PC-3 (cell line): ENCODE measurements at regions of chr3 and their contacts with region 1.

Region 1: DNA sequence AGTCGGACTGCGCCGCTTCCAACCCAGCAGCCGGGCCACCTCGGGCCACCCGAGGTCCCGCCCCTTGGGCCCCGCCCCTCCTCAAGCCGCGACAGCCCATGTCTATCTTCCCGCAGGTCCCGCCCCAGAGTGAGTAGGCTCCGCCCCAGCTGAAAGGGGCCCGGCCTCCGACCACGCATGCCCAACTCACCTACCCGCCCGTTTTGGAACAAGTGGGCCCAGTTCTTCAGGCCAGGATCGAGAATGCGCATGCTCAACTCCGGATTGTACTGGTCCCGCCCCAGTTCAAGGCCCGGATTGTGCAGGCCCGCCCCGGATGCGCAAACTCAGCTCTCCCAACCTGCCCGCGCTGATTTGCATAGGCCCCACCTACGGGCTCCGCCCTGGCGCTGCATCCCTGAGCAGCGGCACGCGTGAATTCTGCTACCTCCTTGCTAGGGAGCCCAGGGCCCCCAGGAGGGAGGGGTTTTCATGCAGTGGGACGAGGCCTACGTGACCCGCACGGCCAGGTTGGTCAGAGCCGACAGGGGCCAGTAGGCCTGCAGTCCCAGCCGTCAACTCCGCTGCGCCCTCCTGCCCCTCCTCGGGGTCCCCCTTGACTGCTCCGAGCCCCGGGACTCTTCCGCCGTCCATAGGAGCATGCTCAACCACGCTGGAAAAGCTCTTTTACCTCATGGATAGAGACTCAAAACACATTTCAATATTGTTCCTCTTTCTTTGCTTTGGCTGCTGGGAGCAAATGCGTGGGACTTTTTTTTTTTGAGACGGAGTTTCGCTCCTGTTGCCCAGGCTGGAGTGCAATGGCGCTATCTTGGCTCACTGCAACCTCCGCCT is at the start of gene PFKFB4:
- DNase-seq: peak; percentile 99
- ATAC-seq: peak; percentile 87
- H3K4me3 ChIP-seq: peak within 1 kb of the TSS; percentile 86
- H3K27ac ChIP-seq: peak within 1 kb of the TSS; percentile 9; the same call in 1 of the 2 replicates
- H3K4me1 ChIP-seq: peaks cover 31% of the 10 kb centered on the region
- H3K27me3 ChIP-seq: no peaks in the 10 kb centered on the region
- CTCF ChIP-seq: no peak
- total RNA-seq, gene PFKFB4: 33.5 and 35.2 TPM in 2 replicates

Region 2: DNA sequence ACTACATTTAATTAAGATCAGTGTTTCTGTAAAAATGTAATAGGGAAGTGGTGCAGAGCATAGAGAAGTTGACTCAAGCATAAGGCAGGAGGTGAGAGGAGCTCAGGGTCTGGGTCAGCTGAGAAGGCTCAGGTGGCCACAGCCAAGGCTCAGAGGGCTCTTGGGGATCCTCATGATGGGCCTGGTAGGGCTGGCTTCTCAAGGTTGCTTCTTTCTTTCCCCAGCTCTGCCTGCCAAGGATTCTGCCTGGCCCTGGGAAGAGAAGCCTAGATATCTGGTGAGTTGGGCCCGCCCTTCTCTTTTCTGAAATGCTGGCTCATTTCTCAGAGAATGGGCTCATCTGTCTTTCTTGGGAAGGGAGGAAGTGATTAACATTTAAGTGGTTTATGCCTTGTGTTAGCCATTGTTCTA is 309.6 kb before region 1 on chr3:
- CTCF ChIA-PET with region 1: no interaction called
- POLR2A ChIA-PET with region 1: no interaction called
- intact Hi-C with region 1: no loop called
- DNase-seq: no peak
- ATAC-seq: peak; percentile 89
- H3K4me3 ChIP-seq: no peak overlapping the region
- H3K27ac ChIP-seq: peak overlapping the region; percentile 13; the same call in 1 of the 2 replicates
- H3K4me1 ChIP-seq: peaks cover 5% of the 10 kb centered on the region; the same call in 1 of the 2 replicates
- H3K27me3 ChIP-seq: no peaks in the 10 kb centered on the region
- CTCF ChIP-seq: no peak

Region 3: GRCh38 chr3:48446425-48447193 is 110.4 kb before region 1 on chr3 and contains the start of gene ATRIP:
- CTCF ChIA-PET with region 1: interaction called, 4 read pairs
- POLR2A ChIA-PET with region 1: interaction called, 11 read pairs
- intact Hi-C with region 1: loop called (anchors 5 kb)
- DNase-seq: peak; percentile 93
- ATAC-seq: peak; percentile 89
- H3K4me3 ChIP-seq: peak within 1 kb of the TSS; percentile 98
- H3K27ac ChIP-seq: peak within 1 kb of the TSS; percentile 38
- H3K4me1 ChIP-seq: peaks cover 30% of the 10 kb centered on the region
- H3K27me3 ChIP-seq: no peaks in the 10 kb centered on the region
- CTCF ChIP-seq: no peak
- total RNA-seq, gene ATRIP: 13.9 and 16.1 TPM in 2 replicates

Region 4: GRCh38 chr3:48478596-48479555 is 78.1 kb before region 1 on chr3:
- CTCF ChIA-PET with region 1: no interaction called
- POLR2A ChIA-PET with region 1: no interaction called
- intact Hi-C with region 1: no loop called
- DNase-seq: no peak
- ATAC-seq: no peak
- H3K4me3 ChIP-seq: no peak overlapping the region
- H3K27ac ChIP-seq: no peak overlapping the region
- H3K4me1 ChIP-seq: no peaks in the 10 kb centered on the region
- H3K27me3 ChIP-seq: no peaks in the 10 kb centered on the region
- CTCF ChIP-seq: no peak

Region 5: GRCh38 chr3:48528754-48529153 is 28.3 kb before region 1 on chr3:
- CTCF ChIA-PET with region 1: no interaction called
- POLR2A ChIA-PET with region 1: interaction called, 11 read pairs
- intact Hi-C with region 1: no loop called
- DNase-seq: no peak
- ATAC-seq: no peak
- H3K4me3 ChIP-seq: no peak overlapping the region
- H3K27ac ChIP-seq: no peak overlapping the region
- H3K4me1 ChIP-seq: no peaks in the 10 kb centered on the region
- H3K27me3 ChIP-seq: no peaks in the 10 kb centered on the region
- CTCF ChIP-seq: no peak

Region 6: GRCh38 chr3:48635222-48636021 is 78.4 kb after region 1 on chr3 and contains the start of gene SLC26A6:
- CTCF ChIA-PET with region 1: interaction called, 5 read pairs
- POLR2A ChIA-PET with region 1: no interaction called
- intact Hi-C with region 1: loop called (anchors 2 kb)
- DNase-seq: peak; percentile 98
- ATAC-seq: peak; percentile 95
- H3K4me3 ChIP-seq: peak within 1 kb of the TSS; percentile 90
- H3K27ac ChIP-seq: no peak within 1 kb of the TSS; the same call in 1 of the 2 replicates
- H3K4me1 ChIP-seq: peaks cover 26% of the 10 kb centered on the region
- H3K27me3 ChIP-seq: no peaks in the 10 kb centered on the region
- CTCF ChIP-seq: peak; percentile 74
- total RNA-seq, gene SLC26A6: 38.1 and 44.9 TPM in 2 replicates